H1 (cell line): ENCODE measurements at regions of chr19 and their contacts with region 1.

Region 1: DNA sequence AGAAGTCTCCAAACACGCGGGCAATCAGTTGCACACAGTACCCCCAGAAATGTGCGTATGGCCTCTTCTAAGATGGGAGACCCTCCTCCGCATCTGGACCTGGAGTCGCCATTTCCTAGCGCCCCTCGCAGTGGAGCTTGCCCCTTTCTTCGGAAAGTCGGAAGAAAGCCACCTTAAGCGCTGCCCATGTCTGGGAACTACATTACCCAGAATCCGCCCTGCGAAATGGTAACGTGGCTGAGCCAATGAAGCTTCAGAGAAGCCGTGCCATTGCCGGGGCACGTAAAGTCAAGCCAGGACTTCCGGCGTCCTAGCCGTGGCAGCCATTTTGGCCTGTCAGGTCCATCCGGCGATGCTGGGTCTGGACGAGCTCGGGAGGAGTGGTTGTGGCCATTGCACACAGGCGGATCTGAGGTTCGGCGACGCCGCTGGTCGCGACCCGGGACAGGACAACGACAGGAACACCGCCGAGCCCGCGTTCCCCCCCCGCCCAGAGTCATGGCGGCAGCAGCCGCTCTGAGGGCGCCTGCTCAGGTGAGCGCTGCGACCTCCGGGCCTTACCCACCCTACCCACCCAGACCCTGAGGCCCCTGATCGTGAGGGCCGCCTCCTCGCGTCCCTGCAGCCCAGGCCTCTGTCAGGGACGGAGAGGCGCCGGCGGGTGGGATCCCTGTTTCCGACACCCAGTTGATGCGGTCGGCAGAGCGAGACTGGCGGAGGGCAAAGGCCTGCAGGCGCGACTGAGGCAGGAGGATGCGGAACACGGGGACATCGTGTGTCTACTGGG is at the start of gene ZNF586:
- DNase-seq: peak; percentile 89
- H3K4me3 ChIP-seq: peak within 1 kb of the TSS; percentile 68 to 91 (median 81)
- H3K27ac ChIP-seq: peak within 1 kb of the TSS; percentile 62
- H3K4me1 ChIP-seq: peaks cover 0 to 5% (median 0%) of the 10 kb centered on the region in 4 experiments; a peak in 3 of 7 replicates
- H3K27me3 ChIP-seq: no peaks in the 10 kb centered on the region
- CTCF ChIP-seq: no peak
- EP300 ChIP-seq: no peak
- POLR2A ChIP-seq: peak in 1 of 2 experiments; percentile 66; a peak in 2 of 3 replicates
- RAD21 ChIP-seq: no peak
- total RNA-seq, gene ZNF586: 14.5 and 15.5 TPM in 2 replicates

Region 2: GRCh38 chr19:57689750-57690149 is 79.8 kb before region 1 on chr19:
- CTCF ChIA-PET with region 1: no interaction called
- POLR2A ChIA-PET with region 1: no interaction called
- DNase-seq: no peak
- H3K4me3 ChIP-seq: no peak overlapping the region
- H3K27ac ChIP-seq: no peak overlapping the region
- H3K4me1 ChIP-seq: no peaks in the 10 kb centered on the region
- H3K27me3 ChIP-seq: no peaks in the 10 kb centered on the region
- CTCF ChIP-seq: no peak
- EP300 ChIP-seq: no peak
- POLR2A ChIP-seq: no peak
- RAD21 ChIP-seq: no peak

Region 3: GRCh38 chr19:57781815-57782214 is 12.3 kb after region 1 on chr19:
- CTCF ChIA-PET with region 1: no interaction called
- POLR2A ChIA-PET with region 1: interaction called, 17 read pairs
- DNase-seq: no peak
- H3K4me3 ChIP-seq: no peak overlapping the region
- H3K27ac ChIP-seq: no peak overlapping the region
- H3K4me1 ChIP-seq: peaks cover 0 to 2% (median 0%) of the 10 kb centered on the region in 4 experiments; a peak in 1 of 7 replicates
- H3K27me3 ChIP-seq: no peaks in the 10 kb centered on the region
- CTCF ChIP-seq: no peak
- EP300 ChIP-seq: no peak
- POLR2A ChIP-seq: no peak
- RAD21 ChIP-seq: no peak